ENCODE measurements at regions of chr2 and their contacts with region 1.

Region 1: DNA sequence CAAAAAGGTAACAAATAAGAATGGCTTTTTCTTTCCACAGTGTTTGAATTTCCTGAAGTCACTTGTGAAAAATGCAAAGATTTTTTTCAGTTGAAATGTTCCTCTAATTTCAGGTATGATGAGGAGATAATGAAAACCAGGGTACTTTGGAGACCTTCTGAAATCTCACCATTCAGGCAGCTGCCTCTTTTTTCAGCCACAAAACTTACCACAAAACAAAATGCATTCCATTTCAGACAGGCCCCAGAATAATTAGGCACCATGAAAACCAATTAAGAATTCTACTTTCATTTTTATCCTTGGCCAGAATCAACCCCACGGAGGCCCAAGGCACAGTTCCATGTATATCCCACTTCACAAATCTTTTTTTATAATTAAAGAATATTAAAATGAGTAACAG is 880.3 kb upstream of the ACVR2A start:
- DNase-seq: peak; percentile 27
- H3K4me3 ChIP-seq: no peak overlapping the region
- CTCF ChIP-seq: no peak

Region 2: DNA sequence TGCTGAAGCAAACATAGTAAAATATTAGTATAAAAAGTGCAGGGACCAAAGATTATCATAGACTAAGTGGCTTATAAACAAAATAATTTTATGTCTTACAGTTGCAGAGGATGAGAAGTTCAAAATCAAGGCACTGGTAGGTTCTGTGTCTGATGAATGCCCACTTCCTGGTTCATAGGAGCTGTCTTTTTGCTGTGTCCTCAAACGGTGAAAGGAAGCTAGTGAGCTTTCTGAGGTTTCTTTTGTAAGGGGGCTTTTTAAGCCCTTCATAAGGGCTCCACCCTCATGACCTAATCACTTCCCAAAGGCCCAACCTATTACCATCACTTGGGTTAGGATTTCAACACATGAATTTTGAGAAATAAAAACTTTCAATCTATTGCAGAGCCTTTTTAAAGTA is 66.4 kb before region 1 on chr2:
- in situ Hi-C with region 1: loop called (anchors 5 kb)
- DNase-seq: no peak
- H3K4me3 ChIP-seq: no peak overlapping the region
- CTCF ChIP-seq: no peak

Measured in astrocyte of the cerebellum (primary cell).